CD8-positive, alpha-beta T cell (primary cell): ENCODE measurements at regions of chr18 and their contacts with region 1.

Region 1: GRCh38 chr18:35240664-35241447 is at the start of gene ZNF397:
- DNase-seq: peak; percentile 85 to 97 (median 96)
- ATAC-seq: peak; percentile 96
- H3K4me3 ChIP-seq: peak within 1 kb of the TSS; percentile 87 to 96
- H3K4me3 Mint-ChIP-seq: peak within 1 kb of the TSS; percentile 96
- H3K27ac ChIP-seq: peak within 1 kb of the TSS; percentile 94 to 98
- H3K27ac Mint-ChIP-seq: peak within 1 kb of the TSS; percentile 97
- H3K4me1 ChIP-seq: peaks cover 18% of the 10 kb centered on the region
- H3K4me1 Mint-ChIP-seq: peaks cover 39% of the 10 kb centered on the region
- H3K27me3 ChIP-seq: no peaks in the 10 kb centered on the region
- H3K27me3 Mint-ChIP-seq: no peaks in the 10 kb centered on the region
- CTCF ChIP-seq: no peak
- total RNA-seq, gene ZNF397: 6.7 to 6.8 TPM

Region 2: GRCh38 chr18:34611904-34612303 is 629.0 kb before region 1 on chr18:
- CTCF ChIA-PET with region 1: no interaction called
- POLR2A ChIA-PET with region 1: no interaction called
- intact Hi-C with region 1: no loop called
- DNase-seq: no peak
- ATAC-seq: no peak
- H3K4me3 ChIP-seq: no peak overlapping the region
- H3K4me3 Mint-ChIP-seq: no peak overlapping the region
- H3K27ac ChIP-seq: no peak overlapping the region
- H3K27ac Mint-ChIP-seq: no peak overlapping the region
- H3K4me1 ChIP-seq: no peaks in the 10 kb centered on the region
- H3K4me1 Mint-ChIP-seq: no peaks in the 10 kb centered on the region
- H3K27me3 ChIP-seq: no peaks in the 10 kb centered on the region
- H3K27me3 Mint-ChIP-seq: no peaks in the 10 kb centered on the region
- CTCF ChIP-seq: no peak

Region 3: GRCh38 chr18:34867520-34867919 is 373.3 kb before region 1 on chr18:
- CTCF ChIA-PET with region 1: no interaction called
- POLR2A ChIA-PET with region 1: no interaction called
- intact Hi-C with region 1: loop called in 1 of 2 experiments (anchors 10 kb)
- DNase-seq: peak in 1 of 9 experiments; percentile 6
- ATAC-seq: no peak
- H3K4me3 ChIP-seq: no peak overlapping the region
- H3K4me3 Mint-ChIP-seq: no peak overlapping the region
- H3K27ac ChIP-seq: no peak overlapping the region
- H3K27ac Mint-ChIP-seq: no peak overlapping the region
- H3K4me1 ChIP-seq: peaks cover 3% of the 10 kb centered on the region
- H3K4me1 Mint-ChIP-seq: peaks cover 16% of the 10 kb centered on the region
- H3K27me3 ChIP-seq: no peaks in the 10 kb centered on the region
- H3K27me3 Mint-ChIP-seq: no peaks in the 10 kb centered on the region
- CTCF ChIP-seq: no peak

Region 4: GRCh38 chr18:35040988-35041814 is 199.7 kb before region 1 on chr18 and contains the start of gene MAPRE2:
- CTCF ChIA-PET with region 1: no interaction called
- POLR2A ChIA-PET with region 1: interaction called, 8 read pairs
- intact Hi-C with region 1: loop called (anchors 1 to 5 kb)
- DNase-seq: peak; percentile 99 to 100 (median 100)
- ATAC-seq: peak; percentile 79
- H3K4me3 ChIP-seq: peak within 1 kb of the TSS; percentile 87 to 90
- H3K4me3 Mint-ChIP-seq: peak within 1 kb of the TSS; percentile 98
- H3K27ac ChIP-seq: peak within 1 kb of the TSS; percentile 93 to 96
- H3K27ac Mint-ChIP-seq: peak within 1 kb of the TSS; percentile 96
- H3K4me1 ChIP-seq: peaks cover 42% of the 10 kb centered on the region
- H3K4me1 Mint-ChIP-seq: peaks cover 44% of the 10 kb centered on the region
- H3K27me3 ChIP-seq: no peaks in the 10 kb centered on the region
- H3K27me3 Mint-ChIP-seq: no peaks in the 10 kb centered on the region
- CTCF ChIP-seq: no peak
- total RNA-seq, gene MAPRE2: 137 to 145 TPM

Region 5: GRCh38 chr18:35290073-35290735 is 49.3 kb after region 1 on chr18 and contains the start of gene ZSCAN30:
- CTCF ChIA-PET with region 1: interaction called, 3 read pairs
- POLR2A ChIA-PET with region 1: interaction called, 12 read pairs
- intact Hi-C with region 1: loop called (anchors 1 kb)
- DNase-seq: peak; percentile 92 to 98 (median 96)
- ATAC-seq: peak; percentile 94
- H3K4me3 ChIP-seq: peak within 1 kb of the TSS; percentile 78 to 82
- H3K4me3 Mint-ChIP-seq: peak within 1 kb of the TSS; percentile 99
- H3K27ac ChIP-seq: peak within 1 kb of the TSS; percentile 69 to 85
- H3K27ac Mint-ChIP-seq: peak within 1 kb of the TSS; percentile 99
- H3K4me1 ChIP-seq: peaks cover 17% of the 10 kb centered on the region
- H3K4me1 Mint-ChIP-seq: peaks cover 70% of the 10 kb centered on the region
- H3K27me3 ChIP-seq: no peaks in the 10 kb centered on the region
- H3K27me3 Mint-ChIP-seq: no peaks in the 10 kb centered on the region
- CTCF ChIP-seq: no peak
- total RNA-seq, gene ZSCAN30: 6.2 to 6.3 TPM

Region 6: GRCh38 chr18:35580701-35581539 is 340.1 kb after region 1 on chr18:
- CTCF ChIA-PET with region 1: no interaction called
- POLR2A ChIA-PET with region 1: no interaction called
- intact Hi-C with region 1: loop called (anchors 5 to 10 kb)
- DNase-seq: peak; percentile 26 to 83 (median 59)
- ATAC-seq: peak; percentile 73
- H3K4me3 ChIP-seq: peak overlapping the region; percentile 53 to 65
- H3K4me3 Mint-ChIP-seq: peak overlapping the region; percentile 75
- H3K27ac ChIP-seq: peak overlapping the region; percentile 57 to 65
- H3K27ac Mint-ChIP-seq: peak overlapping the region; percentile 68
- H3K4me1 ChIP-seq: peaks cover 13% of the 10 kb centered on the region
- H3K4me1 Mint-ChIP-seq: peaks cover 27% of the 10 kb centered on the region
- H3K27me3 ChIP-seq: no peaks in the 10 kb centered on the region
- H3K27me3 Mint-ChIP-seq: peaks cover 14% of the 10 kb centered on the region
- CTCF ChIP-seq: no peak

Region 7: DNA sequence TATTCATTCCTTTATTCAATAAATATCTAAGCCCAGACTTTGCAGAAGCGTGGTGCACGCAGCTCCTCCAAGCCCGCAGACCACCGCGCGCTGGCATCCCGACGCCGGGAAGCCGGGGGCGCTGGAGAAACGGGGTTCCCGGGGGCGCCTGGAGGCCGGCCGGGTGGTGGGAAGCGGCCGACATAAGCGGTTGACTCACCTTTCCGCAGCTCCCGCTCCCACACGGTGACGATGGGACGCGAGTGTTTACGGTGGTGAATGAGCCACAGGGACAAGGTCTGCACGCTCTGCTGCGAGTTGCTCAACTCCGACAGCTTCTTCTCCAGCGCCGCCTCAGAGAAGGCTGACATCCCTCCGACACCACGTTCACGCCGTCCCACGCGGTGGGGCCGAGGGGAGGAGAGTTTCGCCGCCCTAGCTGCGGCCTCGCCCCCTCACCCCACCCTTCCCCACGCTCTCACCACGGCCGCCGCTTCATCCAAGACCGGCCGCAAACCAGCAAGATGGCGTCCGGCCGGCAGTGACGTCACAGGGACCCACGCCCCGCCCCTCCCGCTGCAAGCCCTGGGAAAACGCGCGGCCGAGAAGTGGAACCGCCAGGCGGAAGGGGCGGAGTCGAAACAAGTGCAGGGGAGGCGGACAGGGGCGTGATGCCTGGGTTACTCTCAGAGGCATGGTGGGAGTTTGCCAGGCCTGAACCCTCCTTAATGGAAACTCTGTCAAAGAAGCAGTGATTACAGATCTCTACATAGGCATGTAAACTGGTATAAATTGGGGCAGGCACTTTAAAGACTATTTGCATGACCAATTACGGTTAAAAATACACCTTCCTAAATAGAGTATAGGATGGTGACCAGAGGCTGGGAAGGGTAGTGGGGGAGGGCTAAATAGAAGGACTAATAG is 826.5 kb after region 1 on chr18 and contains the start of gene RPRD1A:
- CTCF ChIA-PET with region 1: no interaction called
- POLR2A ChIA-PET with region 1: no interaction called
- intact Hi-C with region 1: loop called (anchors 2 to 5 kb)
- DNase-seq: peak; percentile 92 to 99 (median 97)
- ATAC-seq: peak; percentile 93
- H3K4me3 ChIP-seq: peak within 1 kb of the TSS; percentile 95 to 98
- H3K4me3 Mint-ChIP-seq: peak within 1 kb of the TSS; percentile 94
- H3K27ac ChIP-seq: peak within 1 kb of the TSS; percentile 88 to 89
- H3K27ac Mint-ChIP-seq: peak within 1 kb of the TSS; percentile 96
- H3K4me1 ChIP-seq: peaks cover 29% of the 10 kb centered on the region
- H3K4me1 Mint-ChIP-seq: peaks cover 46% of the 10 kb centered on the region
- H3K27me3 ChIP-seq: no peaks in the 10 kb centered on the region
- H3K27me3 Mint-ChIP-seq: peaks cover 3% of the 10 kb centered on the region
- CTCF ChIP-seq: no peak
- total RNA-seq, gene RPRD1A: 13.8 to 15.8 TPM

Region 8: GRCh38 chr18:36828630-36829361 is 1587.9 kb after region 1 on chr18 and contains the starts of genes KIAA1328 and TPGS2:
- CTCF ChIA-PET with region 1: no interaction called
- POLR2A ChIA-PET with region 1: no interaction called
- intact Hi-C with region 1: loop called in 1 of 2 experiments (anchors 2 kb)
- DNase-seq: peak; percentile 75 to 94 (median 85)
- ATAC-seq: peak; percentile 90
- H3K4me3 ChIP-seq: peak within 1 kb of the TSS; percentile 99
- H3K4me3 Mint-ChIP-seq: peak within 1 kb of the TSS; percentile 81
- H3K27ac ChIP-seq: peak within 1 kb of the TSS; percentile 70 to 71
- H3K27ac Mint-ChIP-seq: peak within 1 kb of the TSS; percentile 93
- H3K4me1 ChIP-seq: peaks cover 22% of the 10 kb centered on the region
- H3K4me1 Mint-ChIP-seq: peaks cover 42% of the 10 kb centered on the region
- H3K27me3 ChIP-seq: no peaks in the 10 kb centered on the region
- H3K27me3 Mint-ChIP-seq: no peaks in the 10 kb centered on the region
- CTCF ChIP-seq: peak; percentile 58
- total RNA-seq, gene KIAA1328: 6.9 to 7.0 TPM
- total RNA-seq, gene TPGS2: 14.5 to 16.4 TPM